ENCODE measurements at regions of chr5 and their contacts with region 1.

Region 1: DNA sequence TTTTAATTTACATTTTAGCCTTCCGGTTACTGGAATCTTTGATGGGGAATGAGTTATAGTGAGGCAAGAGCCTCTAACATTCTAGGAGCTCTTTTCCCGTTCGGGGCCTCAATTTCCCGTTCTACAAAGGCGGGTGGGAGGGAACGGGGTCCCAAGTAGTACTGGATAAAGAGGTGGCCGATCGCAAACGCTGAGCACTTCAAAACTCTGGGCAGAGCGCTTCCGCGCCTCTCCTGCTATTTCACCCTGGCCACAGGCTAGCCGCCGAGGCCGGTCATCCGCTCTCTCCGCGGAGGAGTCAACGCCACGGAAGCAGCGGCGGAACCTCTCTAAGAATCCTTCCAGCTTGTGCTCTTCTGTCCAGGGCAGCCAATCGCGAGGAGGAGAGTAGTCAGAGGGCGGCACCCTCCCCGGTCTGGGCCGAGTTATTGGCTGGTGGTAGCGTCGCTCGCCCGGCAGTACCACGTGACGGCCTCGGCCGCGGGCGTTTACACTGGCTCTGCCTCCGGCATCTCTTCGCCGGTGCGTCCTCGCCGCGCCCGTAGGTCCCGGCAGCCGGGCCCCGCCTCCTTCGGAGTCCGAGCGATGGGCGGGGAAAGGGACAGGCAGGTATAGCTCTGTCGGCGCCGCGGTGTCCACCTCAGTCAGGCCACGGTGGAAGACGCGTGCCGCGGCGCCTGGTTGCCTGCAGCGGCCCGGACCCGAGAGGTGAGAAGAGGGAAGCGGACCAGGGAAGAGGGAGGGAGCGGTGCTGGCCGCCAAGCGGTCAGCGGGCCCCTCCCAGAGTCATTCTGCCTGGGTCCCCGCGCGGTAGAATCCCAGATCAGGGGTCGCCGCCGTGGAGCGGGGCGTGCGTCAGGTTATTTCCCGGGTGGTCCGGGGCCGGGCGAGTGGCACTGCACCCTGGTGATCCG is at the start of gene SLC26A2:
- DNase-seq: peak; percentile 97
- H3K4me3 Mint-ChIP-seq: peak within 1 kb of the TSS; percentile 98
- H3K27ac Mint-ChIP-seq: peak within 1 kb of the TSS; percentile 100
- H3K4me1 Mint-ChIP-seq: peaks cover 30% of the 10 kb centered on the region
- H3K27me3 Mint-ChIP-seq: no peaks in the 10 kb centered on the region
- total RNA-seq, gene SLC26A2: 3.5 to 3.7 TPM

Region 2: GRCh38 chr5:149114403-149115312 is 845.9 kb before region 1 on chr5:
- CTCF ChIA-PET with region 1: no interaction called
- intact Hi-C with region 1: no loop called
- DNase-seq: peak; percentile 67
- H3K4me3 Mint-ChIP-seq: no peak overlapping the region
- H3K27ac Mint-ChIP-seq: no peak overlapping the region
- H3K4me1 Mint-ChIP-seq: no peaks in the 10 kb centered on the region
- H3K27me3 Mint-ChIP-seq: peaks cover 4% of the 10 kb centered on the region

Region 3: GRCh38 chr5:149345147-149345875 is 615.2 kb before region 1 on chr5 and contains the start of gene GRPEL2:
- CTCF ChIA-PET with region 1: no interaction called
- intact Hi-C with region 1: loop called (anchors 10 kb)
- DNase-seq: peak; percentile 97
- H3K4me3 Mint-ChIP-seq: peak within 1 kb of the TSS; percentile 91
- H3K27ac Mint-ChIP-seq: peak within 1 kb of the TSS; percentile 95
- H3K4me1 Mint-ChIP-seq: peaks cover 52% of the 10 kb centered on the region
- H3K27me3 Mint-ChIP-seq: no peaks in the 10 kb centered on the region
- total RNA-seq, gene GRPEL2: 44.7 to 49.6 TPM

Region 4: GRCh38 chr5:149636851-149637246 is 323.7 kb before region 1 on chr5:
- CTCF ChIA-PET with region 1: interaction called, 3 read pairs
- intact Hi-C with region 1: loop called (anchors 1 kb)
- DNase-seq: peak; percentile 82
- H3K4me3 Mint-ChIP-seq: no peak overlapping the region
- H3K27ac Mint-ChIP-seq: no peak overlapping the region
- H3K4me1 Mint-ChIP-seq: peaks cover 13% of the 10 kb centered on the region
- H3K27me3 Mint-ChIP-seq: no peaks in the 10 kb centered on the region

Region 5: GRCh38 chr5:149834246-149834855 is 126.2 kb before region 1 on chr5:
- CTCF ChIA-PET with region 1: interaction called, 50 read pairs
- intact Hi-C with region 1: loop called (anchors 1 kb)
- DNase-seq: peak; percentile 79
- H3K4me3 Mint-ChIP-seq: no peak overlapping the region
- H3K27ac Mint-ChIP-seq: no peak overlapping the region
- H3K4me1 Mint-ChIP-seq: peaks cover 5% of the 10 kb centered on the region
- H3K27me3 Mint-ChIP-seq: no peaks in the 10 kb centered on the region

Region 6: DNA sequence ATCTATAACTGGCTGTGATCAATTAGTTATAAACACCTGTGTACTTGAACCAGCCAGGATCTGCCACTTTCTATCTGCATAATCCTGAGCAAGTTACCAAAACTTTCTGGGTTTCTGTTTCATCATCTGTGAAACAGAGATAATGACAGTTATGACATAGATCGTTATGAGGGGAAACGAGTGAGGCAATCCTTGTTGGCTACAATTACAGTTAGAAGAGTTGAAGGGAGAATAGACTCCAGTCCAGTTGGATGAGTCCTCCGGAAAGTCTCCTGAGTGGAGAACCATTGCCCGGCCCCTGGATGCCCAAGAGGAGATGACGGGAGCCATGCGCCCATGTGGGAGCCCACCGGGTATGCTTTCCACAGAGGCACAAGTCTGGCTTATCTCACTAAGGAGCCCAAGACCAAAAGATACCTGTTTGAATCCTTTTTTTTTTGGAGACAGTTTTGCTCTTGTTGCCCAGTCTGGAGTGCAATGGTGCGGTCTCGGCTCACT is 20.4 kb before region 1 on chr5:
- CTCF ChIA-PET with region 1: interaction called, 5 read pairs
- intact Hi-C with region 1: loop called (anchors 1 kb)
- DNase-seq: peak; percentile 10
- H3K4me3 Mint-ChIP-seq: no peak overlapping the region
- H3K27ac Mint-ChIP-seq: no peak overlapping the region
- H3K4me1 Mint-ChIP-seq: peaks cover 6% of the 10 kb centered on the region
- H3K27me3 Mint-ChIP-seq: no peaks in the 10 kb centered on the region

Region 7: DNA sequence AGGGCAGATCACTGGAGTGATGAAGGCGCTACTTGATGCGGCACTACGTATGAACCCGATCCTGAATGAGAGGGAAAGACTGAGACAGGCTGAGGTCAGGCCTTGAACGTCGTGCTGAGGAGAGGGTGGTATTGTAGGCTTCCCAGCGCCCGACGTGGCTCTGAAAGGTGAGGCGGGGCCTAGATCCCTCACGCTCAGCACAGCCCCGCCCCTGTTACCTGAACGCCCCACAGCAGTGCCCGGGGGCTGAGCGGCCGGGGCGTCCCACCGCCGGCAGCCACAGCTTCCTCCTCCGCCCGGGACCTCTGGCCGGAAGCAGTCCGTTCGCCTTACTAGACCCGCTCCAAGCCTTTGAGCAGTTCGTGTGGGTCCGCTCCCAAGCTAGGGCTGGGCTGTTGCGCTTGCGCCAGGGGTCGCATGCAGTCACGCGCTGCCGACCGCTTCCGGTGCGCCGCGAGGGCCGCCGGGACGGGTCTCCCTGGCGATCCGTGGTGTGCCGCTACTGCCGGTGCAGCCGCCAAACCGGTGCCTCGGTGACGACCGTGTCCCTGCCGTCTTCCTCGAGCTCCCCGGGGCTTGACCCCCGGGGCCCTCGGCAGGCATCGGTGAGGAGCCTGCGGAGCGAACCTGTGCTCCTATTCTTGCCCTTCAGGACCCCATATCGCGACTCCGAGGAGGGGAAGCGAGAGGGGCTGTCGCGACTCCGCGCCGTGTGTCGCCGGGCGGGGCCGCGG is 39.9 kb after region 1 on chr5 and contains the starts of genes HMGXB3 and TIGD6:
- CTCF ChIA-PET with region 1: interaction called, 5 read pairs
- intact Hi-C with region 1: loop called (anchors 1 kb)
- DNase-seq: peak; percentile 91
- H3K4me3 Mint-ChIP-seq: peak within 1 kb of the TSS; percentile 86
- H3K27ac Mint-ChIP-seq: peak within 1 kb of the TSS; percentile 85
- H3K4me1 Mint-ChIP-seq: peaks cover 39% of the 10 kb centered on the region
- H3K27me3 Mint-ChIP-seq: no peaks in the 10 kb centered on the region
- total RNA-seq, gene HMGXB3: 24.3 to 26.8 TPM
- total RNA-seq, gene TIGD6: 2.6 to 2.7 TPM

Region 8: DNA sequence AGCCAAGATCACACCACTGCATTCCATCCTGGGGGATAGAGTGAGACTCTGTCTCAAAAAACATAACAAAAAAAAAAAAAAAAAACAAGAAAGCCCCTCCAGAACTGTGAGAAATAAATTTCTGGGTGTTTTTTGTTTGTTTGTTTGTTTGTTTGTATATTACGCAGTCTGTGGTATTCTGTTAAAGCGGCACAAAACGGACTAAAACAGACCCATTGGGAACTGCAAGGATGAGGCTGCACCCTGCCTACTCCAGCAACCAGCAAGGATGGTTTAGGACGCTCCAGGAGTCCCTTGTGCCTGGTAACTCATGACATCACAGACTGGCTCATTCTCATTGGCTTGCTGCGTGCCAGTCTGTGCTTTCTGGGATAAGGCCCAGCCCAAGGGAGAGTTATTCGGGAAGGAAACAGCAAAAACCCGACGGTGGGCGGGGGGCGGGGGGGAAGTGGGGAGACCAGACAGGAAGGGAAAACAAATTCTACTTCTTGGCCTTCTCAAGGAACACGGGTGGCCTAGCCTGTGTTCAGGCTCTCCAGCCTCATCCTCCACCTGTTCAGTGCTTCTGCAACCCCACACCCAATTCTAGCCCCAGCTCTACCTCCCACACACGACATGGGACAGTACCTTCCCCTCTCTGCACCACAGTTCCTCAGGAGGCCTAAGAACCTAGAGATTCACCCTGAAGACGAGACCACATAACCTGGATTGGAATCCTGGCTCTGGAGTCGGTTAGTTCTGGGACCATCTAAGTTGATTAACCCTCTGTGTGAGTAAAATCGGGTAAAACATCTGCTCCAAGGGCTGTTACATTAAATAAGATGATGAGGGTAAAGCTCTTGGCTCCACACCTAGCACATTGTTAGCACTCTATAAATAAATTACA is 449.4 kb after region 1 on chr5:
- CTCF ChIA-PET with region 1: interaction called, 3 read pairs
- intact Hi-C with region 1: loop called (anchors 2 kb)
- DNase-seq: peak; percentile 70
- H3K4me3 Mint-ChIP-seq: peak overlapping the region; percentile 98
- H3K27ac Mint-ChIP-seq: peak overlapping the region; percentile 98
- H3K4me1 Mint-ChIP-seq: peaks cover 39% of the 10 kb centered on the region
- H3K27me3 Mint-ChIP-seq: no peaks in the 10 kb centered on the region

Measured in activated naive CD4-positive, alpha-beta T cell treated with anti-CD3 and anti-CD28 coated beads for 36 hours (primary cell).